Ascending aorta (tissue), 2 donors: ENCODE measurements at regions of chr1 and their contacts with region 1.

Region 1: DNA sequence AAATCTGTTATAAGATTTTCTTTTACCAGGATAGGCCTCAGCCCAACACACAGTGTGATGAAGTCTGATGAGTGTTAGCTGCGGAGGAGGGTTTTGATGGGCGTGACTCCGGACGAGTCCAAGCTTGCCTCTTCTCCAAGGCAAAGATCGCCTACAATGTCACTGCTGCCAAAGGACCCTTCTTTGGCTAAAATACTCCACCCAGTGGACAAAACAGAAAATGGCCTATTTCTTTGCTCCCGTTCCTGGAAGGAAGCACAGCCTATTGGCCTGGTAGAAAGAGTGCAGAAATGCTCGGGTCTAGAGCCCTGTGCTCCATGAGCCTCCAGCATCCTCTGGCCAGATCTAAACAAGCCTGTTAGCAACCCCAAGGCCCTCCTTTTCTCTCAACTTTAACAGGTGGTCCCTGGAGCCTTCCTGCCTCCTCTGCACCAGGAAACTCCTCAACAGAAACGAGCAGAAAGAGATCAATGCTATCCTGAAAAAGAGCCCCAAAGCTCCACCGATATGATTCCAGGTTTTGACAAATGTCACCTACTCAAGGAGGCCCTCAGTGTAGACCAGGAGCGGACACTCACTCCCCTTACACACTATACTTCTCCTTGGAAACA is 3.4 kb upstream of the CASQ2 start:
- DNase-seq: peak in 1 of 2 donors; percentile 77
- H3K4me3 ChIP-seq: peak overlapping the region; percentile 5 to 44
- H3K27ac ChIP-seq: no peak overlapping the region
- H3K4me1 ChIP-seq: no peaks in the 10 kb centered on the region
- H3K27me3 ChIP-seq: no peaks in the 10 kb centered on the region
- CTCF ChIP-seq: peak; percentile 55 to 70 (median 63)

Region 2: DNA sequence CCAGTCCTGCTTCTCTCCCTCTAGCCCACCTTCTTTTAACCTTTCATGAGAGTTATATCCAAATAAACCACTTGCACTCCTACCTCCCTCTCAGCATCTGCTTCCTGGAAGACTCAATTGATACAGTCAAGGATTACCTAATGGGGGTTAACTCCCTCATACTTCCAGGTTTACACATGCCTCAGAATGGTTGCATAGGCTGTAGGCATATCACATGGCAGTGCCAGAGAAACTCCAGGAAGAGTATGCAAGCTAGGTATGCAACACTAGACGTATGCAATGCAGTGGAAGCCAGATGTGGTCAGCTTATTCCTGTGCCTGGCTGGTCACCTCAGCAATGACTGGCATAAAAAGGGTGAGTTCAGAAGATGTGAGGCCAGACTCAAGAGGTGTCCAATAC is 162.9 kb before region 1 on chr1:
- intact Hi-C with region 1: loop called (anchors 5 kb)
- DNase-seq: no peak
- H3K4me3 ChIP-seq: no peak overlapping the region
- H3K27ac ChIP-seq: no peak overlapping the region
- H3K4me1 ChIP-seq: no peaks in the 10 kb centered on the region
- H3K27me3 ChIP-seq: no peaks in the 10 kb centered on the region
- CTCF ChIP-seq: no peak

Region 3: GRCh38 chr1:115717541-115717940 is 54.4 kb before region 1 on chr1:
- intact Hi-C with region 1: loop called (anchors 1 kb)
- DNase-seq: peak in 1 of 2 donors; percentile 68
- H3K4me3 ChIP-seq: no peak overlapping the region
- H3K27ac ChIP-seq: no peak overlapping the region
- H3K4me1 ChIP-seq: no peaks in the 10 kb centered on the region
- H3K27me3 ChIP-seq: no peaks in the 10 kb centered on the region
- CTCF ChIP-seq: peak; percentile 24 to 63 (median 40)